Posterior vena cava (tissue), 2 donors: ENCODE measurements at regions of chr9 and their contacts with region 1.

Region 1: DNA sequence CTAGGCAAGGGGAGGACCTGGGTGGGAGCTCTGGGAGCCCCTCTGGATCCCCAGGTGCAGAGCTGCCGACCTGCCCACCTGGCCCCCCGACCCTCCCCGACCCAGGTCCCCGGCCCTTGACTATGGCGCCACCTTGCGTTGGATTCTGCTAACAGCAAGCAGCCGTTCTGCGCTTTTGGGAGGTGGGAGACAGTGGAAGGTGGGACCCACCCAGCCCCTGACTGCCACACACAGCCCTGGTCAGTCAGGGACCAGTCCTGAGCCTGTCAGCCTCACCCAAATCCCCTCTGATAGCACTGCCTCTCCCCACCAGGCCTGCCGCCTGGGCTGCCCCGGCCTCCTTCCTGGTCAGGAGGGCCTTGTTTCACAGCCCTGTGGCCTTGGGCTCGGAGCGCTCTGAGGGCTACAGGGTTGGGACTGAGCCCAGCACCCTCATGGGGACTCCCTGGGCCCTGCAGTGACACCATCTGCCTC is 77.9 kb downstream of the HMCN2 start:
- DNase-seq: no peak

Region 2: GRCh38 chr9:130107234-130107861 is 236.1 kb before region 1 on chr9:
- intact Hi-C with region 1: loop called in 1 of 2 experiments (anchors 10 kb)
- DNase-seq: peak; percentile 96